IMR-90 (cell line): ENCODE measurements at regions of chr1 and their contacts with region 1.

Region 1: GRCh38 chr1:205739348-205740160 is 10.4 kb downstream of the NUCKS1 start:
- DNase-seq: peak; percentile 94
- ATAC-seq: peak; percentile 88
- H3K4me3 ChIP-seq: no peak overlapping the region
- H3K27ac ChIP-seq: peak overlapping the region; percentile 10; the same call in 1 of the 2 replicates
- H3K4me1 ChIP-seq: peaks cover 7% of the 10 kb centered on the region; the same call in 1 of the 2 replicates
- H3K27me3 ChIP-seq: no peaks in the 10 kb centered on the region
- CTCF ChIP-seq: peak; percentile 38
- POLR2A ChIP-seq: no peak
- RAD21 ChIP-seq: peak; percentile 8; the same call in 1 of the 2 replicates

Region 2: DNA sequence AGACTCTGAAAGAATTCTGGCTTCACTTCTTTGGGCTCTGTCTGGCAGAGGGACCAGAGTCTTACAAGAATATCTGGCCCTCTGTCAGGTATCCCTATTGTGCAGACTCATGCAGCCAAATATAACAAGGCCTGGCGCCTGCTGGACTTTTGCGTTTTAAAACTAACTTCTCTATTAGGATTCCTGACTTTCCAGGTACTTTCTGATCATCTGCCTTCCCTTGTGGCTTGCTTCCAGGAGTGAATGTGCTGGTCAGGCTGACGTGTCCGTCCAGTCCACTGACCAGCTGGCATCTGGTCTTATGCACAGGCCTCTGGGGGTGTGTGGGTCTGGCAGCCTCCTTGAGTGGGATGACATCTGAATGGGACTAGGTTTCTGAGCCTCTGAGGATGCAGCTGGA is 44.4 kb after region 1 on chr1:
- CTCF ChIA-PET with region 1: no interaction called
- POLR2A ChIA-PET with region 1: interaction called, 11 read pairs
- dilution Hi-C with region 1: no loop called
- in situ Hi-C with region 1: no loop called
- intact Hi-C with region 1: no loop called
- DNase-seq: peak; percentile 48
- ATAC-seq: no peak
- H3K4me3 ChIP-seq: no peak overlapping the region
- H3K27ac ChIP-seq: no peak overlapping the region
- H3K4me1 ChIP-seq: no peaks in the 10 kb centered on the region
- H3K27me3 ChIP-seq: peaks cover 2% of the 10 kb centered on the region
- CTCF ChIP-seq: no peak
- POLR2A ChIP-seq: no peak
- RAD21 ChIP-seq: no peak

Region 3: GRCh38 chr1:205907794-205908193 is 168.2 kb after region 1 on chr1:
- CTCF ChIA-PET with region 1: no interaction called
- POLR2A ChIA-PET with region 1: no interaction called
- dilution Hi-C with region 1: no loop called
- in situ Hi-C with region 1: no loop called
- intact Hi-C with region 1: loop called (anchors 2 kb)
- DNase-seq: peak; percentile 49
- ATAC-seq: peak; percentile 88
- H3K4me3 ChIP-seq: no peak overlapping the region
- H3K27ac ChIP-seq: no peak overlapping the region
- H3K4me1 ChIP-seq: no peaks in the 10 kb centered on the region
- H3K27me3 ChIP-seq: peaks cover 11% of the 10 kb centered on the region
- CTCF ChIP-seq: peak; percentile 64
- POLR2A ChIP-seq: no peak
- RAD21 ChIP-seq: peak; percentile 63